Aorta (tissue), 5 donors: ENCODE measurements at regions of chr2 and their contacts with region 1.

Region 1: DNA sequence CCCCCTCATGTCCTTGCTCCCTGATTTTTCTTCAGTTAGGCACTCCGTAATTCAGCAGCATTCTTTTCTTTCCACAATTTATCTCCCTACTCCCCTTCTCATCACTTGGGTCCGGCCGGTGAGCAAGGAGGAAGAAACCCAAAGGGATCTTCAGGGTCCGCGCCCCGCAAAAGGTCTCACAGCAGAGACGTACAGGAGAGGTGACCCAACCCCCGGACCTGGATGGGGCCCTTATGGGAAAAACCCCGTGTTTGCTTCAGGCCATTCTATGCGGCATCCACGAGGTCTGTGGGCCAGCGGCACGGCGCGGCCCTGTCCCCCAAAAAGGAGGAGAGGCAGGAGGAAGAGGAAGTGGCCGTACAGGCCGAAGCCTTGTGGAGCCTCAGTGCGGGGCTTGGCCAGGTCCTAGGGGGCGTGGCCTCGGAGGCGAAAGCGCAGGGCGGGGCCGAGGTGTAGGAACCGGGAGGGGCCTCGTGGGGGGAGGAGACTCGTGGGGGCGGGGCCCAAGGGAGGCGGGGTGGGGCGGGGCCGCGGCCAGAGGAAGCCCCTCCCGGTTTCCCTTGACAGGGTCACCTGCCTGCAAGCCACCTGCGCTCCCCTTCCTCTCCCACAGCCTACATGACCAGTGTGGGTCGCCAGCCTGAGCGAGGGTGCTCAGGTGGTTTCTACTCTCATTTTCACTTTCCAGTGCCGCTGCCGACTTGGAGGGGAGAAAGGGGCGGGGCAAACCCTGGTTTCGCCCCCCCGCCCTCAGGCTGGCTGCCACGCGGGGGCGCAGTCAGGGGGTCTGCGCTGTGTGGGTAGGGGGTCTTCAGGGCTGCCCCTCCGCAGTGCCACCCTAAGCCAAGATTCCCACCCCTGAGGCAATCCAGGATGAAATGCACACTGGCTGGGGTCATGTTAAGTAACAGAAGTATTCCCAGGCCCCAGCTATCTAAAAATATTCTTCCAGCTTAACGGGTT is 156.4 kb upstream of the XPO1 start:
- DNase-seq: peak; percentile 97 to 98
- ATAC-seq: peak; percentile 100
- H3K4me3 ChIP-seq: peak overlapping the region; percentile 38 to 75
- H3K27ac ChIP-seq: no peak overlapping the region
- H3K4me1 ChIP-seq: no peaks in the 10 kb centered on the region
- H3K27me3 ChIP-seq: no peaks in the 10 kb centered on the region

Region 2: DNA sequence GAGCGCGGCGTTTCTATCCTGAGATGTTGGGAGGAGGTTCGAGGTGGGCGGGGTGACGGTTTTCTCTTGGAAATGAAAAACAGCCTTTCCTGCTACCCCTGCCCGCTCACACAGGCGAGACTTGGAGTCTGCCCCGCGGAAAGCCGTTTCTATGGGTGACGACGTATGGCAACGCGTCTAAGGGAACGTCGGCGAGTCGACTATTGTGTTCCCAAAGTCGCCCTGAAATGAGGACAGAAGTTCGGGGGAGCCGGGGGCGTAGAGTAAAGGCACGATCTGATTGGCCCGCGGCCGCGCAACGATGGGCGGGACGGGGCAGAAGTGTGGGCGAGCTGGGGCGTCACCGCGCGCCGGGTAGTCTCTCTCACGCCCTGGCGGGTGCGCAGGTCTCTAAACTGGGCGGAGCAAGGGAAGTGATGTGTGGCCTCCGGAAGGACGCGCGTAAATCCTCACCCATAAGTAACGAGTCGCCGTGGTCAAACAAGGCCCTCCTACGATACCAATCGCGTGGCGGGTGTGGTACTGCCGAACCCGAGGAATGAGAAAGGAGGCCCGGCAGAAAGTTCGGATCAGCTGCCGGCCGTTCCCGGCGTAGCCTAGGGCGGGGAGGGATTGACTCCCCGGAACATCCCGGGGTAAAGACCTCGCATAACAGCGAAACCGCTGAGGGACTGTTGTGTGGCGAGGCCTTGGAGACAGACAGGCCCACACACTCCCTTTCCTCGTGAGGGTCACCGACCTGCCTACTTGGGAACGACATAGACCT is 69.6 kb after region 1 on chr2:
- intact Hi-C with region 1: loop called in 1 of 2 experiments (anchors 5 kb)
- DNase-seq: peak; percentile 98
- ATAC-seq: peak; percentile 99
- H3K4me3 ChIP-seq: peak overlapping the region; percentile 68 to 86
- H3K27ac ChIP-seq: peak overlapping the region; percentile 10 to 97
- H3K4me1 ChIP-seq: no peaks in the 10 kb centered on the region
- H3K27me3 ChIP-seq: no peaks in the 10 kb centered on the region